Stomach (tissue), 19 donors: ENCODE measurements at regions of chr10 and their contacts with region 1.

Region 1: DNA sequence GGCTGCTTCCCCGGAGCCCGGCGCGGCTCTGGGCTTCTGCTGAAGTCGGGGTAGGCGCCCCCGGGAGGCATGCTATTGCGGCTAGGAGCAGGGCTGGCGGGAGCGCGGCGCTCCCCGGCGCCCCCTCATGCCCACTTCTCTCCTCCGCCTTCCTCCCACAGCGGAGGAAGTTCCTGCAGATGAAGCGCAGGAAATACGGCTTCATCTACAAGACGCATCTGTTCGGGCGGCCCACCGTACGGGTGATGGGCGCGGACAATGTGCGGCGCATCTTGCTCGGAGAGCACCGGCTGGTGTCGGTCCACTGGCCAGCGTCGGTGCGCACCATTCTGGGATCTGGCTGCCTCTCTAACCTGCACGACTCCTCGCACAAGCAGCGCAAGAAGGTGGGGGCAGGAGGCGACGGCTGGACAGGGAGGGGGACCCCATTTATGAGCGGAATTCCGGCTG is 479 bp downstream of the CYP26A1 start:
- DNase-seq: peak in 1 of 2 donors; percentile 47
- H3K4me3 ChIP-seq: peak overlapping the region; percentile 30 to 60 (median 39)
- H3K27ac ChIP-seq: no peak overlapping the region
- H3K4me1 ChIP-seq: peaks cover 39 to 43% (median 42%) of the 10 kb centered on the region in 4 donors
- H3K27me3 ChIP-seq: peaks cover 25 to 96% (median 67%) of the 10 kb centered on the region in 3 donors
- CTCF ChIP-seq: no peak
- EP300 ChIP-seq: no peak
- POLR2A ChIP-seq: no peak

Region 2: GRCh38 chr10:92432596-92432995 is 641.6 kb before region 1 on chr10:
- intact Hi-C with region 1: no loop called
- DNase-seq: no peak
- H3K4me3 ChIP-seq: no peak overlapping the region
- H3K27ac ChIP-seq: no peak overlapping the region
- H3K4me1 ChIP-seq: no peaks in the 10 kb centered on the region
- H3K27me3 ChIP-seq: no peaks in the 10 kb centered on the region
- CTCF ChIP-seq: no peak
- EP300 ChIP-seq: no peak
- POLR2A ChIP-seq: no peak

Region 3: GRCh38 chr10:93293999-93294398 is 219.8 kb after region 1 on chr10:
- intact Hi-C with region 1: loop called (anchors 10 kb)
- DNase-seq: no peak
- H3K4me3 ChIP-seq: no peak overlapping the region
- H3K27ac ChIP-seq: no peak overlapping the region
- H3K4me1 ChIP-seq: no peaks in the 10 kb centered on the region
- H3K27me3 ChIP-seq: no peaks in the 10 kb centered on the region
- CTCF ChIP-seq: no peak
- EP300 ChIP-seq: no peak
- POLR2A ChIP-seq: no peak

Region 4: GRCh38 chr10:94591461-94592205 is 1517.5 kb after region 1 on chr10:
- intact Hi-C with region 1: no loop called
- DNase-seq: no peak
- H3K4me3 ChIP-seq: no peak overlapping the region
- H3K27ac ChIP-seq: no peak overlapping the region
- H3K4me1 ChIP-seq: no peaks in the 10 kb centered on the region
- H3K27me3 ChIP-seq: no peaks in the 10 kb centered on the region
- CTCF ChIP-seq: no peak
- EP300 ChIP-seq: no peak
- POLR2A ChIP-seq: no peak